ENCODE measurements at regions of chr2 and their contacts with region 1.

Region 1: GRCh38 chr2:112726497-112727190 is 5.8 kb downstream of the NT5DC4 start:
- DNase-seq: peak; percentile 92
- ATAC-seq: peak; percentile 93

Region 2: GRCh38 chr2:112601751-112602150 is 124.9 kb before region 1 on chr2:
- intact Hi-C with region 1: loop called (anchors 5 kb)
- DNase-seq: peak; percentile 35
- ATAC-seq: no peak

Region 3: DNA sequence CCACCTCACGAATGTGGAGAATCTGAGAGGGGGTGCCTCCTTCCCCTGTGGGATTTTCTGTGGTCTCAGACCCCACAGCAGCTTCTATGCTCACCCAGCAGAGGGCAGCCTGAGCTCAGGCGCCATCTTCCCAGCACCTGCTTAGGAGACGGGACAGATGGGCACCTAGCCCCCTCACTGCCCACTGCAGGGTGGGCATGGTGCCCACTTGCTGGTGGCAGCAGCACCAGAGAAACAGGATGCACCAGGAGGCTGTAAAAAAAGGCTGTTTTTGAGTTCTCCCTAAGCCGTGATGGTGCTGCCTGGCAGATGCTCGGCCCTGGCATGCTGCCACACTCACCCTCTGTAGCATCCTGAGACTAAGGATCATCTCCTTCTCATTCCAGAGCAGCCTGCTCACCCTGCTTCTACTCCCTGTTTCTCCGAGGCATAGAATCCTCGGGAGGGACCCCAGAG is 100.0 kb before region 1 on chr2:
- intact Hi-C with region 1: loop called (anchors 10 kb)
- DNase-seq: peak; percentile 72
- ATAC-seq: peak; percentile 83

Measured in sciatic nerve (tissue), 2 donors.